ENCODE measurements at regions of chr10 and their contacts with region 1.

Region 1: GRCh38 chr10:6667679-6668270 is 87.7 kb upstream of the PRKCQ start:
- DNase-seq: peak; percentile 33 to 66
- ATAC-seq: peak; percentile 81 to 90
- H3K4me3 ChIP-seq: no peak overlapping the region
- H3K27ac ChIP-seq: no peak overlapping the region
- H3K4me1 ChIP-seq: no peaks in the 10 kb centered on the region
- CTCF ChIP-seq: peak; percentile 82
- EP300 ChIP-seq: no peak
- POLR2A ChIP-seq: no peak
- RAD21 ChIP-seq: peak; percentile 75 to 82

Region 2: DNA sequence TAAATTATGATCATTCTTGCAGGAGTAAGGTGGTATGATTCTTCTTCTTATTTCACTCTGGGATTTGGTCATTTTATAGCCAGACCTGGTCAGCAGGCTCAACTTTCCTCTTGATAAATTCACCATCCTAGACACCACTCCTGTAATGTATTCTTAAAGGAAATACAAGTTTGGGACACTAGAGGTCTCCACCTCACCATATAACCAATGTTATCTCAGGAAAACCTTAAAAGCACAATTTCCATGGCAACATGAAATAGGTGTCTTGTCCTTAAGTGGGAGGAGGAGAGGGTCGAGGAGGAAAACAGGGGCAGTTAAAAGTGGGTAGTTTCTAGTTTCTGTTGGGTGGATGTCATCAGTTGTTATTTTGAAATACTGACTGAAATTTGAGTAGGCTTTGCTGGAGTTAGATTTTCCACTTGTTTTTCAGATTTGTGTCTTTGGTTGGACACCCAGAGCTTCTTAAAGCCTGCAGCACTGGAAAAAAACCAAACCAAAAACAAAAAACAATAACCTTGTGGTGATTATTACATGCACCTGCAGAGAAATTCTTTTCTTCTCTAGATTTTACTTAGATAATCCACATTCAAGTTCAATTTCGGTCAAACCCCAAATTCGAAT is 250.8 kb before region 1 on chr10:
- CTCF ChIA-PET with region 1: interaction called, 30 read pairs
- POLR2A ChIA-PET with region 1: no interaction called
- DNase-seq: peak; percentile 71 to 75
- ATAC-seq: peak; percentile 86 to 95
- H3K4me3 ChIP-seq: no peak overlapping the region
- H3K27ac ChIP-seq: no peak overlapping the region
- H3K4me1 ChIP-seq: no peaks in the 10 kb centered on the region
- CTCF ChIP-seq: peak; percentile 88
- EP300 ChIP-seq: no peak
- POLR2A ChIP-seq: no peak
- RAD21 ChIP-seq: peak; percentile 88 to 94

Region 3: DNA sequence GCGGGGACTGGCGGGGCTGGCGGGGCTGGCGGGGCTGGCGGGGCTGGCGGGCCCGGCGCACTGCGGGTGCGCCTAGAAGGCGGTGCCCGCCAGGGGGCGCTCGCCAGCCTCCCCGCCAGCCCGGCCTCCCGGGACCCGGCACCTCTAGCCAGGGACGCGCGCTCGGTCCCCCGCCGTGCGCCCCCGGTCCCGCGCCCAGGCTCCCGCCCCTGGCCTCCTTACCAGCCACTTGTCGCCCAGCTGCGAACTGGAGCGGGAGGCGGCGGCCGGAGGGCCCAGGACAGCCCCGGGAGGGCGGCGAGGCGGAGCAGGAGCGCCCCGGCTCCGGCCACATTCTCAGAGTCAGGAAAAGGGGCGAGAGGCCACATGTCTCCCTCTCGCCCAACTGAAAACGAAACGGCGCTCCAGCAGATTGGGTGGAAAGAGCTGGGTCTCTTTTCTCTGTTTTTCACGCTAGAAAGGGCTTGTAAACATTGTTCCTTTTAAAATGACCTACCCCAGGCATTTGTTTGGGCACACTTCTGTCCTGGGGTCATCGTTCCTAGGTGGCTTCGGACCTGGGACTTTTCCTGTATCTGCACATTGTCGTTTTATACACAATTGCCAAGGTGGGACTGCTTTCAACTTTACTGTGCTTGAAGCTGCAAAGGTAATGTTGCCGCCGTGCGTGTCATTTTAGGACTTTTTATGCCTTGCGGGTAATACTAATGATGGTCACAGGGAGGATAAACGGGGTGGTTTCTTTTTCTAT is 87.3 kb before region 1 on chr10:
- CTCF ChIA-PET with region 1: interaction called, 10 read pairs
- POLR2A ChIA-PET with region 1: no interaction called
- DNase-seq: peak; percentile 47 to 78
- ATAC-seq: peak; percentile 96 to 97
- H3K4me3 ChIP-seq: peak overlapping the region; percentile 66
- H3K27ac ChIP-seq: peak overlapping the region; percentile 87 to 98
- H3K4me1 ChIP-seq: peaks cover 11% of the 10 kb centered on the region
- CTCF ChIP-seq: peak; percentile 93
- EP300 ChIP-seq: no peak
- POLR2A ChIP-seq: peak; percentile 70
- RAD21 ChIP-seq: peak; percentile 8 to 58; a peak in 3 of 5 replicates

Region 4: GRCh38 chr10:6678211-6678803 is 10.5 kb after region 1 on chr10:
- CTCF ChIA-PET with region 1: interaction called, 23 read pairs
- POLR2A ChIA-PET with region 1: no interaction called
- DNase-seq: peak; percentile 44 to 63
- ATAC-seq: peak; percentile 70 to 80; a peak in 5 of 6 replicates
- H3K4me3 ChIP-seq: no peak overlapping the region
- H3K27ac ChIP-seq: no peak overlapping the region
- H3K4me1 ChIP-seq: no peaks in the 10 kb centered on the region
- CTCF ChIP-seq: peak; percentile 77
- EP300 ChIP-seq: no peak
- POLR2A ChIP-seq: no peak
- RAD21 ChIP-seq: peak; percentile 70 to 76

Measured in A549 (cell line).